ENCODE measurements at regions of chr4 and their contacts with region 1.

Region 1: GRCh38 chr4:121726642-121727268 is 30.0 kb upstream of the ANXA5 start:
- DNase-seq: peak; percentile 74
- H3K4me3 Mint-ChIP-seq: no peak overlapping the region
- H3K27ac Mint-ChIP-seq: peak overlapping the region; percentile 67
- H3K4me1 Mint-ChIP-seq: peaks cover 7% of the 10 kb centered on the region
- H3K27me3 Mint-ChIP-seq: no peaks in the 10 kb centered on the region
- CTCF ChIP-seq: peak; percentile 64

Region 2: DNA sequence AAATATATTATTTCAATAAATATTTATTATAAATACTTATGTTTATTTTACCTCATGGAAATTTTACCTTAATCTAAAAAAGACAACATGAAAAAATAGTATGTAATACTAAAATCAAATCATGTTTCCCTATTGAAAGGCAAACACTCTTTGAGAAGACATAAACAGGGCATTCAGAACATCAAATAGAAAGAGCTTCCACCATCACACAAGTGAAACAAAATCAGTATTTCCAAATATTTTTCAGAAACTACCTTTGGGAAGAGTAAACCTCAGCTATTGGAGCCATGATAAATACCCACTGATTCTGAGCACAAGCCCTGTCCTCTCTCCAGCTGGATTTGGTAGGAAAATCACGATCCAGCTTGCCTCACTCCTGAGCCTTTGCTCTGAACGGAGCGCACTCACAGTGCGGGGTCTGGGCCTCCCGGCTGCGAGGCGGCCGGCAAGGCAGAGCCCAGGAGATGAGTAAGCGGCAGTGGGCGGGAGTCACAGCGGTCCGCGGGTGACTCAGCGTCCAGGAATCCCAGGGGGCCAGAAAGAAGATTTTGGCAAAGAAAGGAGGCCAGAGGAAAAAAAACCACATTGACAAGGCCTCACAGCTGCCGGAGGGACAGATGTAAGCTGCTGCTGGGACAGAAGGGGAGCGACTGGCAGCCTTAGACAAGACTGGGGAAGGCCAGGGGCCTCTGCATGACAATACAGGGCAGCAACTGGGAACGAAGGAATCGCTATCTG is 15.3 kb before region 1 on chr4:
- CTCF ChIA-PET with region 1: interaction called, 19 read pairs
- POLR2A ChIA-PET with region 1: interaction called, 9 read pairs
- intact Hi-C with region 1: no loop called
- DNase-seq: peak; percentile 93
- H3K4me3 Mint-ChIP-seq: peak overlapping the region; percentile 69
- H3K27ac Mint-ChIP-seq: peak overlapping the region; percentile 93
- H3K4me1 Mint-ChIP-seq: peaks cover 31% of the 10 kb centered on the region
- H3K27me3 Mint-ChIP-seq: no peaks in the 10 kb centered on the region
- CTCF ChIP-seq: no peak

Region 3: DNA sequence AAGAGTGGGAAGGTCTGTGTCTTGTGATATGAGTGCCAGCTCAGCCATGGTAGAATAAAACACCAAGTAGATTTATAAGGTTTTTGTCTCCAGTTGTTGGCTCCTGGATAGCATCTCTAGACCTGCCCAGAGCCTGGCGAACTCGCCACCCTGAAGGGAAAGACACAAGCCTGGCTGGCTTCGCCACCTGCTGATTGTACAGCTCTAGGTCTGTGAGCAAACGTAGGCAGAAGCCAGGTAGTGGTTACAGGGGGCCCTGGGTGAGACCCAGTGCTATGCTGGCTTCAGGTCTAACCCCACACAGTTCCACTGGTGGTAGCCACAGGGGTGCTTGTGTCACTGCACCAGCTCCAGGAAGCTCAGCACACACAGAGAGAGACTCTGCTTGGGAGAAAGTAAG is 525.8 kb after region 1 on chr4:
- CTCF ChIA-PET with region 1: no interaction called
- POLR2A ChIA-PET with region 1: no interaction called
- intact Hi-C with region 1: no loop called
- DNase-seq: no peak
- H3K4me3 Mint-ChIP-seq: no peak overlapping the region
- H3K27ac Mint-ChIP-seq: peak overlapping the region; percentile 32
- H3K4me1 Mint-ChIP-seq: no peaks in the 10 kb centered on the region
- H3K27me3 Mint-ChIP-seq: no peaks in the 10 kb centered on the region
- CTCF ChIP-seq: no peak